ENCODE measurements at regions of chr16 and their contacts with region 1.

Region 1: GRCh38 chr16:31678649-31679325 is 151.1 kb downstream of the AHSP start:
- DNase-seq: no peak
- ATAC-seq: no peak
- H3K4me3 ChIP-seq: no peak overlapping the region
- H3K27ac ChIP-seq: no peak overlapping the region
- H3K4me1 ChIP-seq: no peaks in the 10 kb centered on the region
- H3K27me3 ChIP-seq: peaks cover 0 to 6% (median 0%) of the 10 kb centered on the region in 9 donors
- CTCF ChIP-seq: no peak
- POLR2A ChIP-seq: no peak

Region 2: DNA sequence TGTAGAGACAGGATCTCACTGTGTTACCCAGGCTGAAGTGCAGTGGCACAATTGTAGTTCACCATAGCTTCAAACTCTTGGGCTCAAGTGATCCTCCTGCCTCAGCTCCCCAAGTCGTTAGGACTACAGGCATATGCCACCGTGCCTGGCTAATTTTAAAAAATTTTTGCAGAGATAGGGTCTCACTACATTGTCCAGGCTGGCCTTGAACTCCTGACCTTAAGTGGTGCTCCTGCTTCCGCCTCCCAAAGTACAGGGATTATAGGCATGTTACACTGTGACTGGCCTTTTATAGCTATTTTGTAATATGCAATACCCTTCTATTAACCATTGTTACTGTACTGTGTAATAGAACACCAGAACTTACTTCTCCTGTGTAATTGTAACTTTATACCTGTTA is 55.5 kb after region 1 on chr16:
- intact Hi-C with region 1: loop called in 1 of 10 experiments (anchors 10 kb)
- DNase-seq: no peak
- ATAC-seq: no peak
- H3K4me3 ChIP-seq: no peak overlapping the region
- H3K27ac ChIP-seq: no peak overlapping the region
- H3K4me1 ChIP-seq: no peaks in the 10 kb centered on the region
- H3K27me3 ChIP-seq: no peaks in the 10 kb centered on the region
- CTCF ChIP-seq: no peak
- POLR2A ChIP-seq: no peak

Region 3: GRCh38 chr16:31899505-31899904 is 220.7 kb after region 1 on chr16:
- intact Hi-C with region 1: no loop called
- DNase-seq: no peak
- ATAC-seq: no peak
- H3K4me3 ChIP-seq: no peak overlapping the region
- H3K27ac ChIP-seq: no peak overlapping the region
- H3K4me1 ChIP-seq: peaks cover 0 to 5% (median 0%) of the 10 kb centered on the region in 12 donors
- H3K27me3 ChIP-seq: no peaks in the 10 kb centered on the region
- CTCF ChIP-seq: no peak
- POLR2A ChIP-seq: no peak